B cell (primary cell): ENCODE measurements at regions of chr12 and their contacts with region 1.

Region 1: DNA sequence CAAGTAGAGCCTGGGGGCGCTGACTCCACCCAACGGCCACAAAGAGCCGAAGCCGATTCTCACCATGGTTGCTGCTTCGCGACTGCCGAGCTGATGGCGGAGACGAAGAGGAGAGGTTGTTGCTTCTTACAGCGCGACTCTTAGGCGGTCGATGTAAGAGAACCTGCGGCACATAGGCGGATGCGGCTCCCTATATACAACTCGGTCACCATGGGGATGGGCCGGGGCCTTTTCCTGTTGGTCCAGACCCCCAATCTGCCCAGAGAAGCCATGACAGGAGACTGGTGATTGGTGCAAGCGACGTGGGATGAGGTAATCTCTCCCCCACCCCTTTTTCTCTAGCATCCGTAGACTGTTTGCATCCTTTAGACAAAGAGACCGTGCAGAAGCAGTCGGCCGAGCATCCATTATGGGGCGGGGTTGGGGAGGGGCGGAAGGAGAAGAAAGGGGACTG is at the start of gene TUBA1A:
- DNase-seq: peak; percentile 99
- ATAC-seq: peak; percentile 85
- H3K4me3 ChIP-seq: peak within 1 kb of the TSS; percentile 79 to 98 (median 90)
- H3K4me3 Mint-ChIP-seq: peak within 1 kb of the TSS; percentile 94
- H3K27ac ChIP-seq: peak within 1 kb of the TSS; percentile 94 to 99
- H3K27ac Mint-ChIP-seq: peak within 1 kb of the TSS; percentile 99
- H3K4me1 ChIP-seq: peaks cover 12 to 14% of the 10 kb centered on the region in 2 donors
- H3K4me1 Mint-ChIP-seq: peaks cover 18% of the 10 kb centered on the region
- H3K27me3 ChIP-seq: no peaks in the 10 kb centered on the region
- H3K27me3 Mint-ChIP-seq: no peaks in the 10 kb centered on the region
- CTCF ChIP-seq: no peak
- total RNA-seq, gene TUBA1A: 137 and 142 TPM in 2 replicates

Region 2: GRCh38 chr12:49060237-49061156 is 128.4 kb before region 1 on chr12 and contains the start of gene KMT2D:
- CTCF ChIA-PET with region 1: interaction called, 4 read pairs
- POLR2A ChIA-PET with region 1: no interaction called
- intact Hi-C with region 1: loop called (anchors 1 kb)
- DNase-seq: peak; percentile 97
- ATAC-seq: peak; percentile 72
- H3K4me3 ChIP-seq: peak within 1 kb of the TSS; percentile 81 to 97 (median 91)
- H3K4me3 Mint-ChIP-seq: peak within 1 kb of the TSS; percentile 97
- H3K27ac ChIP-seq: peak within 1 kb of the TSS; percentile 77 to 88
- H3K27ac Mint-ChIP-seq: peak within 1 kb of the TSS; percentile 99
- H3K4me1 ChIP-seq: peaks cover 46 to 50% of the 10 kb centered on the region in 2 donors
- H3K4me1 Mint-ChIP-seq: peaks cover 50% of the 10 kb centered on the region
- H3K27me3 ChIP-seq: no peaks in the 10 kb centered on the region
- H3K27me3 Mint-ChIP-seq: no peaks in the 10 kb centered on the region
- CTCF ChIP-seq: no peak
- total RNA-seq, gene KMT2D: 179 and 199 TPM in 2 replicates

Region 3: DNA sequence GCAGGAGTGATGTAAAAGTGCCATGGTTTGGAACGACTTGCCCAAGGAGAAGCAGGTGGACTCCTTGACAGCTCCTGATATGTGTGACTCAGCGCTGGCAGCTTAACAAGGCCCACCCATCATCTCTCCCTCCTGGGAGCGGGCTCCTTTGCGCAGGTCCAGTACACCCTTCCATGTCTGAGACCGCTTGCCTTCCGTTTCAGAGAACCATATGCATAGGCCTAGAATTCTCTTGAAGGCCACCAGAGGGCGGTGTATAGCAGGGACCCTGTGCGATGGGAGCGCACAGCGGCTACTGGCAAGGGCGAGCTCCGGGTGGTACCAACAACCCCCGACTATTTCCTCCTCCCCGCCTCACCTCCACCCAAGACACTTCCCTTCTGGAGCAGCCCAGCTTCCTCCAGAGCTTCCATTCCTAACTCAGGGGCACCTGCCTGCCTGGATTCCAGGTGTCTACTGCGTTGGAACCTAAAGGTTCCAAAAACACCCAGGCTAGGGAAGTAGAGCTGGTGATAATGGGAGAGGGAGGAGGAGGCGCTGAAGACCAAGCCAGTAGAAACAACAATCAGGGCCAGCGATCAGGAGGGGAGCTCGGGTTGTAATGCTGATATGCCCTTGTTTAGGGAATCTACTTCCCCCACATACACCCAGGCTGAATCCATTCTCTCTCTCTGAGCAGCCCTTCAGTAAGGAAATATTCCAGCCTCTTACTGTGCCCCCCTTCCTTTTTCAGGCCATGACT is 100.6 kb before region 1 on chr12:
- CTCF ChIA-PET with region 1: interaction called, 18 read pairs
- POLR2A ChIA-PET with region 1: interaction called, 4 read pairs
- intact Hi-C with region 1: loop called (anchors 1 kb)
- DNase-seq: peak; percentile 88
- ATAC-seq: peak; percentile 92
- H3K4me3 ChIP-seq: peak overlapping the region in 1 of 5 experiments; percentile 10
- H3K4me3 Mint-ChIP-seq: peak overlapping the region; percentile 70
- H3K27ac ChIP-seq: no peak overlapping the region
- H3K27ac Mint-ChIP-seq: no peak overlapping the region
- H3K4me1 ChIP-seq: peaks cover 47 to 48% of the 10 kb centered on the region in 2 donors
- H3K4me1 Mint-ChIP-seq: peaks cover 38% of the 10 kb centered on the region
- H3K27me3 ChIP-seq: peaks cover 0 to 57% (median 37%) of the 10 kb centered on the region in 4 experiments
- H3K27me3 Mint-ChIP-seq: peaks cover 46% of the 10 kb centered on the region
- CTCF ChIP-seq: peak; percentile 96

Region 4: GRCh38 chr12:49161092-49161795 is 27.7 kb before region 1 on chr12:
- CTCF ChIA-PET with region 1: interaction called, 3 read pairs
- POLR2A ChIA-PET with region 1: interaction called, 8 read pairs
- intact Hi-C with region 1: loop called (anchors 2 kb)
- DNase-seq: peak; percentile 55
- ATAC-seq: peak; percentile 39
- H3K4me3 ChIP-seq: peak overlapping the region in 4 of 5 experiments; percentile 12 to 65 (median 40)
- H3K4me3 Mint-ChIP-seq: peak overlapping the region; percentile 88
- H3K27ac ChIP-seq: peak overlapping the region; percentile 66 to 75
- H3K27ac Mint-ChIP-seq: peak overlapping the region; percentile 87
- H3K4me1 ChIP-seq: peaks cover 27 to 31% of the 10 kb centered on the region in 2 donors
- H3K4me1 Mint-ChIP-seq: peaks cover 29% of the 10 kb centered on the region
- H3K27me3 ChIP-seq: no peaks in the 10 kb centered on the region
- H3K27me3 Mint-ChIP-seq: no peaks in the 10 kb centered on the region
- CTCF ChIP-seq: no peak

Region 5: DNA sequence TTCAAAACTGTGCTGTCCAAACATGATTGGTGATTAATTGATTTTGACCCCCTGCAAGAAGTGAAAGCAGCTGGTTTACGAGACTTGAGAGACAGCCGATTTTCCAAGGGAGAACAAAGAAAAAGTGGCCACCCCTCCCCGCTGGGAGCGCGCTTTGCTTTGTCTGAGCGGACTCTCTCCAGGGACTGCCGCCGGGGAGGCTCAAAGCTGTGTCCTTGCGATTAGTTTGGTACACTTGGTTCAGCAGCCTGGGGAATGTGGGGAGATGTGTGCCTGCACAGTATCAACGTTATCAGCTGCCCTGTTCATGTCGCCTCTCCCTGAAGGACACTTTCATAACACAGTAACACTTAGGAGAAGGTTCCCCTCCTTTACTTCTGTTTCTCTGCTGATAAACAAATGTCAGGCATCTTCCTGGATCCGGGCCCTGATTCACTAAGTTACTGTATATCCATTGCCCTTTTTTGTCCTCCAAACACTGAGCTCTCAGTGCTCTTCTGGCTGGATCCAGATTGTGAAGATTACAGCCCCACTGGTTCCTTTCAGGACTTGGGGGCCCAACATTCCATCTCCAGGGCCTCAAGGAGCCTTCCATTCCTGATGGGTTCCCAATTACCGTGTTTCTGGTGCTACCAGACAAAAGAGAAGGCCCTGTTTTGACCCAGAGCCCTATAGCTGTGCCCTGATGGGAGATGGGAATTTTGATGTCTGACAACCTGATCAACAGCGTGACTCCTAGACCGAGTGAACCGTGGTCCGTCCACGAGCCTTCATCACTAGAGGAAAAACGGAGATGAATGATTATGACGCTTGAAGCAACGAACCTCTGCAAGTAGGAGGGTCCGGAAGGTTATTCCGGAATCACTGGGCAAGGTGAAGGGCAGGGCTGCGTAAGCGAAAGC is 44.2 kb after region 1 on chr12:
- CTCF ChIA-PET with region 1: interaction called, 14 read pairs
- POLR2A ChIA-PET with region 1: interaction called, 5 read pairs
- intact Hi-C with region 1: loop called (anchors 1 kb)
- DNase-seq: no peak
- ATAC-seq: no peak
- H3K4me3 ChIP-seq: peak overlapping the region; percentile 46 to 72 (median 64)
- H3K4me3 Mint-ChIP-seq: peak overlapping the region; percentile 96
- H3K27ac ChIP-seq: peak overlapping the region; percentile 56 to 73
- H3K27ac Mint-ChIP-seq: peak overlapping the region; percentile 90
- H3K4me1 ChIP-seq: peaks cover 5 to 17% of the 10 kb centered on the region in 2 donors
- H3K4me1 Mint-ChIP-seq: peaks cover 17% of the 10 kb centered on the region
- H3K27me3 ChIP-seq: no peaks in the 10 kb centered on the region
- H3K27me3 Mint-ChIP-seq: no peaks in the 10 kb centered on the region
- CTCF ChIP-seq: no peak

Region 6: DNA sequence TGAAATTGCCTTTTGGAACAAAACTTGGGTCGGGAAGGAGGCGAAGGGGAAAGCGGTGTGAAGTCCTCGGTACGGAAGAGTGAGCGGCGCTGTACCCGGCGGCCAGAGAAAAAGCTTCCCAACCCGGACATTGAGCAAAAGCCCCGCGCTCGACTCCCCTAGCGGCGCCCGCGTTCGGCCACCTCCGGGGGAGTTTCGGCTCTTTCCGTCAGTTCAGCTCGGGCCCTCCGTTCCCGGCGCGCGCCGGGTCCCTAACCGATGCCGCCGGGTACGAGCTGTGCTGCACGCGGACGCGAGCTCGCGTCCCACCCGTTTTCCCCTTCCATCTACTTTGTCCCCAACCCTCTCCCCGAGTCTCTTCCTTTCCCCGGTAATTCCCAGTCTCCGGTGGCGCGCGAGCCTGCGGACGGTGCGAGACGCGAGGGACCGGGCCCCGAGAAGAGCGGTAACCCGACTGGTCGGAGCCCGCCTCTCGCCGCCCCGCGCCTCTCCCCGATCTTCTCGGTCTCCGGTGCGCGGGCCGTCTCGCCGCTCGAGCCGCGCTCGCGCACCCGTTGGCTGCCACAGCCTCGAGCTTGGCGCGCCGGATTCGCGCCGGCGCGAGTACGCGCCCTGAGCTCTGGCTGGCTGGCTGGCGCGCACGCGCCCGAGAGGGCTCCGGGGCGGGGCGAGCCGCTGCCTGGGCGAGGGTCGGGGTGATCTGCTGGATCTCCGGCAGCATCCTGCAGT is 177.9 kb after region 1 on chr12:
- CTCF ChIA-PET with region 1: no interaction called
- POLR2A ChIA-PET with region 1: interaction called, 3 read pairs
- intact Hi-C with region 1: loop called (anchors 2 kb)
- DNase-seq: peak; percentile 90
- ATAC-seq: peak; percentile 78
- H3K4me3 ChIP-seq: peak overlapping the region; percentile 61 to 96 (median 80)
- H3K4me3 Mint-ChIP-seq: peak overlapping the region; percentile 87
- H3K27ac ChIP-seq: peak overlapping the region; percentile 90 to 91
- H3K27ac Mint-ChIP-seq: peak overlapping the region; percentile 98
- H3K4me1 ChIP-seq: peaks cover 33 to 39% of the 10 kb centered on the region in 2 donors
- H3K4me1 Mint-ChIP-seq: peaks cover 46% of the 10 kb centered on the region
- H3K27me3 ChIP-seq: no peaks in the 10 kb centered on the region
- H3K27me3 Mint-ChIP-seq: no peaks in the 10 kb centered on the region
- CTCF ChIP-seq: peak; percentile 44